CD4-positive, alpha-beta memory T cell (primary cell): ENCODE measurements at regions of chr3 and their contacts with region 1.

Region 1: GRCh38 chr3:27484015-27484844 is at the start of gene SLC4A7:
- DNase-seq: peak; percentile 97 to 99 (median 98)
- H3K4me3 ChIP-seq: peak within 1 kb of the TSS; percentile 78 to 88
- H3K4me3 Mint-ChIP-seq: peak within 1 kb of the TSS; percentile 94 to 100 (median 99)
- H3K27ac ChIP-seq: peak within 1 kb of the TSS; percentile 83
- H3K27ac Mint-ChIP-seq: peak within 1 kb of the TSS; percentile 96 to 98 (median 97)
- H3K4me1 ChIP-seq: peaks cover 41% of the 10 kb centered on the region
- H3K4me1 Mint-ChIP-seq: peaks cover 28 to 48% (median 35%) of the 10 kb centered on the region in 4 donors
- H3K27me3 ChIP-seq: no peaks in the 10 kb centered on the region
- H3K27me3 Mint-ChIP-seq: no peaks in the 10 kb centered on the region
- total RNA-seq, gene SLC4A7: 98.5 to 103 TPM

Region 2: DNA sequence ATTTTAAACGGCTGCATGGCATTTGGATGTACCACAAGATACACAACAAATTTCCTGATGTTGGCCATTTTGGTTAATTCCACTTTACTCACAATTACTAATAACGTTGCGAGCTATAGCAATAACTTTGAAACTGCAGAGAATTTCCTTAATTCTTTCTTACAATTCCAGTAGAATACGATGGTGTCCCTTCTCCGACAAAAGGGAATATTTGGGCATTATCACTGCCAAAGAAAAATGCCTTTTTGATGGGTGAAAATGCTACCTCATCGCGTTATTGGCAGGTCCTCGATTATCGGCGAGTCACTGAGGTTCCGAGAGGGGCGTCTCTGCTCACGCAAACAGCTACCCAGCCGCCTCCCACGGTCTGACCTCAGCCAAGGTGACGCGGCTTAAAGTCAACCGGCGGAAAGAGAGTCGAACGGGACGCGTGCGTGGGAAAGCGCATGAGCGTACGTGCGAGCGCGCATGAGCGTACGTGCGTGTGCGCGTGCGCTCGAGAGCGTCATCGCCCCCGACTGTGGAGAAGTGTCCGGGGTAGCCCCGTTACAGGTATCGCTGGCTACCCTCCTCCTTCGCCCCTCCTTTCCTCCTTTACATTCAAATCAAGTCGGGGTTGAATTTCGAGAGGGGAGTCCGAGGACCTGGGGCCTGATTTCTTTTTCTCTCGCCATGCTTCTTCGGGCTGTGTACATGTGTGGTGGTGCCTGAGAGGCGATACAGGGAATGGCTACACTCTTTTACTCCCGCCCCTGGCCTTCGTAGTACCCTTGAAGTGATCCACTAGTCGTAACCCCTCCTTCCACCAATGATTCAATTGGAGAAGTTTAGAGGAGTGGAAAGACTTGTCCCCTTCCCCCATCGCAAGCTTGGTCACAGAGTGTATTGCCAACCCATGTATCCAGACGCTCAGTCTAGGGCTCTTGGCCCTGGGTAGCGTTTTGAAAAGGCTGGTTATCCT is 1694.4 kb before region 1 on chr3 and contains the start of gene OXSM:
- CTCF ChIA-PET with region 1: no interaction called
- POLR2A ChIA-PET with region 1: no interaction called
- intact Hi-C with region 1: loop called (anchors 5 kb)
- DNase-seq: peak; percentile 86 to 94 (median 90)
- H3K4me3 ChIP-seq: peak within 1 kb of the TSS; percentile 75 to 80
- H3K4me3 Mint-ChIP-seq: peak within 1 kb of the TSS; percentile 97 to 99 (median 98)
- H3K27ac ChIP-seq: peak within 1 kb of the TSS; percentile 90
- H3K27ac Mint-ChIP-seq: peak within 1 kb of the TSS; percentile 95 to 100 (median 99)
- H3K4me1 ChIP-seq: peaks cover 28% of the 10 kb centered on the region
- H3K4me1 Mint-ChIP-seq: peaks cover 22 to 51% (median 36%) of the 10 kb centered on the region in 4 donors
- H3K27me3 ChIP-seq: no peaks in the 10 kb centered on the region
- H3K27me3 Mint-ChIP-seq: no peaks in the 10 kb centered on the region
- total RNA-seq, gene OXSM: 13.7 to 17.5 TPM

Region 3: GRCh38 chr3:27079427-27080257 is 404.6 kb before region 1 on chr3:
- CTCF ChIA-PET with region 1: no interaction called
- POLR2A ChIA-PET with region 1: no interaction called
- intact Hi-C with region 1: no loop called
- DNase-seq: no peak
- H3K4me3 ChIP-seq: no peak overlapping the region
- H3K4me3 Mint-ChIP-seq: no peak overlapping the region
- H3K27ac ChIP-seq: no peak overlapping the region
- H3K27ac Mint-ChIP-seq: no peak overlapping the region
- H3K4me1 ChIP-seq: no peaks in the 10 kb centered on the region
- H3K4me1 Mint-ChIP-seq: no peaks in the 10 kb centered on the region
- H3K27me3 ChIP-seq: no peaks in the 10 kb centered on the region
- H3K27me3 Mint-ChIP-seq: peaks cover 0 to 4% of the 10 kb centered on the region in 2 donors

Region 4: DNA sequence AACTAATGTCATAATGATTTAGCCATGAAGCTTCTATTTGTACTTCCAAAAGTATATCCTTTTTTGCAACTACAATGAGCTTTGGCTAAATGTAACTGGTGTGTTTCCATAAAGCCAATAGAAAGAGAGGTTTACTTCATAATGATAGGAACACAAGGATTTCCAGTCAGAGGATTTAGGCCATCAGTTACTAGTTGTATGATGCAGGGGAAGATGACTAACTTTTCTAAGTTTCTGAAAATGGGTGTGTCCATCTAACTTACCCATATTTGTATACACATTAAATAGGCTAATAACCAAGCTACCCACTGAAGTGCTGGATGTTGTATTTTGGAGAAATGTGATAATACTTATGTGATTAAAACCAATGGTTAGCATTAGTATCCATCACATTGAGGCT is 55.8 kb before region 1 on chr3:
- CTCF ChIA-PET with region 1: no interaction called
- POLR2A ChIA-PET with region 1: no interaction called
- intact Hi-C with region 1: loop called (anchors 5 kb)
- DNase-seq: no peak
- H3K4me3 ChIP-seq: no peak overlapping the region
- H3K4me3 Mint-ChIP-seq: no peak overlapping the region
- H3K27ac ChIP-seq: no peak overlapping the region
- H3K27ac Mint-ChIP-seq: no peak overlapping the region
- H3K4me1 ChIP-seq: no peaks in the 10 kb centered on the region
- H3K4me1 Mint-ChIP-seq: peaks cover 2 to 7% (median 4%) of the 10 kb centered on the region in 4 donors
- H3K27me3 ChIP-seq: no peaks in the 10 kb centered on the region
- H3K27me3 Mint-ChIP-seq: no peaks in the 10 kb centered on the region

Region 5: GRCh38 chr3:27507515-27508202 is 23.4 kb after region 1 on chr3:
- CTCF ChIA-PET with region 1: no interaction called
- POLR2A ChIA-PET with region 1: no interaction called
- intact Hi-C with region 1: no loop called
- DNase-seq: no peak
- H3K4me3 ChIP-seq: no peak overlapping the region
- H3K4me3 Mint-ChIP-seq: no peak overlapping the region
- H3K27ac ChIP-seq: no peak overlapping the region
- H3K27ac Mint-ChIP-seq: peak overlapping the region in 1 of 7 donors; percentile 37
- H3K4me1 ChIP-seq: no peaks in the 10 kb centered on the region
- H3K4me1 Mint-ChIP-seq: peaks cover 0 to 3% (median under 1%) of the 10 kb centered on the region in 4 donors
- H3K27me3 ChIP-seq: no peaks in the 10 kb centered on the region
- H3K27me3 Mint-ChIP-seq: no peaks in the 10 kb centered on the region

Region 6: DNA sequence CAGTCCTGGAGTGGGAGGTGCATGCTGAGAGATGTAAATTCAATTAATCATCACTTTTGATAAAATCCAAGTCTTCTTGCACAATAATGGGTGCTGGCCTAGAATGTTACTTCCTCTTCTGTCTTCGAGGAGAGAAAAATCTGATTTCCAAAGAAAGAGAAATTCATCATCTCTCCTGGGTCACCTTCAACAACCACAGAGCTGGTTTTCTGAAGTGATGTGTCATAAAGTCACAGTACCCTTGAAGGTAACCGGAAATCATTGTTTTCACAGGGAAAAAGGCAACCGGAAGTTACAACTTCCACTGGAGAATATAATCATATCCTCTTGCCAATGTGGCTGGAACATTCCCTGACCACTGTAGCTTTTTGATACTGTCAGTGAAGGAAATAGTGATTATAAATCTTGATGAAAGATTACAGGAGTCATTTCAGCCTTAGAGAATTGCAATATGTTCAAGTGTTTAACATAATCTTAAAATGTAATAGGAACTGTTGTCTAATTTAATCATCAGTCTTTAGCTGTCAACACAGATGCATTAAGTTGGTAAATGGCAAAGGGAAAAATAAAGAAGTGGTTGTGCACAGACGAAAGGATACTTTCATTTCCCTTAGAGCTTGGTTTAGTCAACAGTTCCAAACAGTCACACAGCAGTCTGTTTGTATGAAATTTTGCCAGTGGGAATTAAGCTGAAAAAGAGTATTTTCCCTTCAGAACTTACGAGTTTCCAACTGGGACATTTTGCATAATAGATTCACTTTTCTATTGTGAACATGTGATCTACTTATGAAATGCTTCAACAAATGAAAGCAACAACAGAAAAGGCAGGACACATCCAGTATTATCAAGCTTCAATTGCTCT is 106.4 kb after region 1 on chr3:
- CTCF ChIA-PET with region 1: no interaction called
- POLR2A ChIA-PET with region 1: interaction called, 8 read pairs
- intact Hi-C with region 1: loop called (anchors 5 kb)
- DNase-seq: no peak
- H3K4me3 ChIP-seq: no peak overlapping the region
- H3K4me3 Mint-ChIP-seq: peak overlapping the region in 6 of 8 donors; percentile 39 to 70 (median 58)
- H3K27ac ChIP-seq: no peak overlapping the region
- H3K27ac Mint-ChIP-seq: peak overlapping the region; percentile 53 to 89 (median 65)
- H3K4me1 ChIP-seq: peaks cover 30% of the 10 kb centered on the region
- H3K4me1 Mint-ChIP-seq: peaks cover 25 to 37% (median 32%) of the 10 kb centered on the region in 4 donors
- H3K27me3 ChIP-seq: no peaks in the 10 kb centered on the region
- H3K27me3 Mint-ChIP-seq: no peaks in the 10 kb centered on the region

Region 7: DNA sequence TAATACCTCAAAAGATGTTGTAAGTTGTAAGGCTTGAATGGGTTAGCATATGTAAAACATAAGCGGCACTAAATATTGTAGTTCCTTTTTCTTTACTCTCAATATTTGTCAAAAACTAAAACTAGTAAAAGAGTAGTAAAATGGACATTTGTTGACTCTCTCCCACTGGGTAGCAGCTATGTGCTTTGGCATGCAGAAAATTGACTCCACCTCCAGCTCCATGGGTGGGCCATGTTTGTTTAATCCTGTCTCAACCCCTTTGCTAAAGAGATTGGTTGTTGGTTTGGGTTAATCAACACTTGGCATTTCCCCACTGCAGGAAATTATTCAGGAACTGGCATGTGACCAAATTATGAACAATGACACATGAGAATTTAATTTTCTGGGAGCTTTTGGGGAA is 123.1 kb after region 1 on chr3:
- CTCF ChIA-PET with region 1: no interaction called
- POLR2A ChIA-PET with region 1: no interaction called
- intact Hi-C with region 1: no loop called
- DNase-seq: no peak
- H3K4me3 ChIP-seq: no peak overlapping the region
- H3K4me3 Mint-ChIP-seq: no peak overlapping the region
- H3K27ac ChIP-seq: no peak overlapping the region
- H3K27ac Mint-ChIP-seq: no peak overlapping the region
- H3K4me1 ChIP-seq: no peaks in the 10 kb centered on the region
- H3K4me1 Mint-ChIP-seq: no peaks in the 10 kb centered on the region
- H3K27me3 ChIP-seq: no peaks in the 10 kb centered on the region
- H3K27me3 Mint-ChIP-seq: peaks cover 0 to 1% of the 10 kb centered on the region in 2 donors

Region 8: GRCh38 chr3:27681245-27681748 is 197.1 kb after region 1 on chr3:
- CTCF ChIA-PET with region 1: interaction called, 3 read pairs
- POLR2A ChIA-PET with region 1: interaction called, 3 read pairs
- intact Hi-C with region 1: loop called (anchors 2 kb)
- DNase-seq: peak; percentile 31 to 73 (median 69)
- H3K4me3 ChIP-seq: no peak overlapping the region
- H3K4me3 Mint-ChIP-seq: peak overlapping the region; percentile 17 to 78 (median 71)
- H3K27ac ChIP-seq: no peak overlapping the region
- H3K27ac Mint-ChIP-seq: peak overlapping the region; percentile 2 to 77 (median 29)
- H3K4me1 ChIP-seq: peaks cover 12% of the 10 kb centered on the region
- H3K4me1 Mint-ChIP-seq: peaks cover 5 to 19% (median 14%) of the 10 kb centered on the region in 4 donors
- H3K27me3 ChIP-seq: no peaks in the 10 kb centered on the region
- H3K27me3 Mint-ChIP-seq: peaks cover 3 to 6% of the 10 kb centered on the region in 2 donors

Region 9: GRCh38 chr3:28348629-28349483 is 864.6 kb after region 1 on chr3 and contains the starts of genes AZI2 and ZCWPW2:
- CTCF ChIA-PET with region 1: no interaction called
- POLR2A ChIA-PET with region 1: interaction called, 11 read pairs
- intact Hi-C with region 1: loop called (anchors 1 kb)
- DNase-seq: peak; percentile 90 to 94 (median 91)
- H3K4me3 ChIP-seq: peak within 1 kb of the TSS; percentile 85 to 94
- H3K4me3 Mint-ChIP-seq: peak within 1 kb of the TSS; percentile 93 to 99 (median 97)
- H3K27ac ChIP-seq: peak within 1 kb of the TSS; percentile 94
- H3K27ac Mint-ChIP-seq: peak within 1 kb of the TSS; percentile 97 to 100 (median 98)
- H3K4me1 ChIP-seq: peaks cover 50% of the 10 kb centered on the region
- H3K4me1 Mint-ChIP-seq: peaks cover 38 to 64% (median 51%) of the 10 kb centered on the region in 4 donors
- H3K27me3 ChIP-seq: no peaks in the 10 kb centered on the region
- H3K27me3 Mint-ChIP-seq: no peaks in the 10 kb centered on the region
- total RNA-seq, gene AZI2: 40.3 to 44.5 TPM
- total RNA-seq, gene ZCWPW2: 0.61 to 1.5 TPM